Caco-2 (cell line): ENCODE measurements at regions of chr20 and their contacts with region 1.

Region 1: GRCh38 chr20:39398656-39399055 is 436.5 kb downstream of the DHX35 start:
- DNase-seq: peak in 1 of 2 experiments; percentile 24
- H3K4me3 ChIP-seq: no peak overlapping the region
- H3K4me3 Mint-ChIP-seq: no peak overlapping the region
- H3K27ac Mint-ChIP-seq: no peak overlapping the region
- H3K4me1 ChIP-seq: no peaks in the 10 kb centered on the region
- H3K4me1 Mint-ChIP-seq: no peaks in the 10 kb centered on the region
- H3K27me3 ChIP-seq: peaks cover 3% of the 10 kb centered on the region; the same call in 1 of the 2 replicates
- H3K27me3 Mint-ChIP-seq: peaks cover 23% of the 10 kb centered on the region
- CTCF ChIP-seq: peak in 1 of 2 experiments; percentile 41

Region 2: GRCh38 chr20:39124064-39124463 is 274.6 kb before region 1 on chr20:
- CTCF ChIA-PET with region 1: no interaction called
- POLR2A ChIA-PET with region 1: no interaction called
- intact Hi-C with region 1: no loop called
- DNase-seq: no peak
- H3K4me3 ChIP-seq: no peak overlapping the region
- H3K4me3 Mint-ChIP-seq: no peak overlapping the region
- H3K27ac Mint-ChIP-seq: no peak overlapping the region
- H3K4me1 ChIP-seq: peaks cover 9% of the 10 kb centered on the region; the same call in 1 of the 2 replicates
- H3K4me1 Mint-ChIP-seq: no peaks in the 10 kb centered on the region
- H3K27me3 ChIP-seq: no peaks in the 10 kb centered on the region
- H3K27me3 Mint-ChIP-seq: peaks cover 16% of the 10 kb centered on the region
- CTCF ChIP-seq: no peak

Region 3: GRCh38 chr20:39289316-39289715 is 109.3 kb before region 1 on chr20:
- CTCF ChIA-PET with region 1: interaction called, 12 read pairs
- POLR2A ChIA-PET with region 1: no interaction called
- intact Hi-C with region 1: no loop called
- DNase-seq: peak in 1 of 2 experiments; percentile 46
- H3K4me3 ChIP-seq: no peak overlapping the region
- H3K4me3 Mint-ChIP-seq: no peak overlapping the region
- H3K27ac Mint-ChIP-seq: peak overlapping the region; percentile 0
- H3K4me1 ChIP-seq: peaks cover 20% of the 10 kb centered on the region
- H3K4me1 Mint-ChIP-seq: peaks cover 23% of the 10 kb centered on the region
- H3K27me3 ChIP-seq: no peaks in the 10 kb centered on the region
- H3K27me3 Mint-ChIP-seq: no peaks in the 10 kb centered on the region
- CTCF ChIP-seq: peak; percentile 34 to 48

Region 4: DNA sequence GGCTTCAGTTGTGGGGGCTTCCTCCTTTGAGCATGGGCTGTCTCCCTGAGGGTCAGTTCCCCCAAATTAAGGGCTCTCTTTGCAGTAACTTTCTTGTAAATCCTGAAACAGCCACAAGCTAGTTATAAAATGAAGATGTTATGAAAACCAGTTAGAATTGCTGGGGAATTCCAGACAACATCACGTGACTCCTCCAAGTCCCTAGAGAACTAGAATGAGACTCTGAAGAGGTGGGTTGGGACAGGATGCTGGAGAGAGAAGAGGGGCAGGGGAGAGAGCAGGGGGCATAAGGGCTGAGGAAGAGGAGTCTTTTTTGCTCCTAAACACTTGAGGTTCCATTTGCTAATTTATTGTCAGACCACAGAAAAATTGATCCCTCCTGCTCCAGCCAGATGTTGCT is 56.2 kb before region 1 on chr20:
- CTCF ChIA-PET with region 1: no interaction called
- POLR2A ChIA-PET with region 1: no interaction called
- intact Hi-C with region 1: no loop called
- DNase-seq: no peak
- H3K4me3 ChIP-seq: no peak overlapping the region
- H3K4me3 Mint-ChIP-seq: no peak overlapping the region
- H3K27ac Mint-ChIP-seq: no peak overlapping the region
- H3K4me1 ChIP-seq: no peaks in the 10 kb centered on the region
- H3K4me1 Mint-ChIP-seq: no peaks in the 10 kb centered on the region
- H3K27me3 ChIP-seq: no peaks in the 10 kb centered on the region
- H3K27me3 Mint-ChIP-seq: peaks cover 9% of the 10 kb centered on the region
- CTCF ChIP-seq: no peak